Right cardiac atrium (tissue), 5 donors: ENCODE measurements at regions of chr11 and their contacts with region 1.

Region 1: GRCh38 chr11:102488208-102488607 is 35.6 kb upstream of the TMEM123 start:
- DNase-seq: no peak
- ATAC-seq: no peak
- H3K4me3 ChIP-seq: no peak overlapping the region
- H3K27ac ChIP-seq: no peak overlapping the region
- H3K4me1 ChIP-seq: no peaks in the 10 kb centered on the region
- H3K27me3 ChIP-seq: no peaks in the 10 kb centered on the region

Region 2: DNA sequence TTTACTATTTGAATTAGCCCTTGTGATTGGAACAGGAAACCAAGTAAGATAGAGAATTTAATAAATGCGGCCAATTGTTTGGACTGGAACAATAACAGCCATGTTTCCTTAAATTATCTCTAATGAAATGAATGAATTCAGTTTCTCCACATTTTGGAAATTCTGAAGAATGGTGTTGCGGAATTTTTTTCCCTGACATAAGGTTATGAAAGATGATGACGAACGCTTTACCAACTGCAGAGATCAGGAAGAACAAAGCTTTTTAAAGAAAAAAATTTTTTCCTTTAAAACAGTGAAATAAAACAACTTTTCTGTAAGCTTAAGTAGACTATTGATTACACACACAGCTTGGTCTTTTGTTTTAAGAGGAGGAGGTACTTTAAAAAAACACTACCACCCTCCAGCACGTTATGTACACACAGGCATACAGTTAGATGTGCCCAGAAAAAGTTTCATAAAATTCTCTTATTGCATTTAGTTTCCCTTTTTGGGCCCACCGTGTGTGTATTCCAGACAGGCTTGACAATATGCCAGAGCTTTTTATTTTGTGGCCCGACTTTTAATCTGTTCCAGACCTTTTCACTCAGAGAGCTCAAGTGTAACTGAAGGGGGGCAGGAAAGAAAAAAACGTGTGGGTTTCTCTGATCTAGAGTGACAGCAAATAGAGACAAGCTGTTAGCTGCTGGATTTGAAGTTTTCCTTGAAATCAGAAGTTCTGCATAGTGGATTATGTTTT is 300.6 kb before region 1 on chr11:
- intact Hi-C with region 1: no loop called
- DNase-seq: no peak
- ATAC-seq: peak in 1 of 2 donors; percentile 51
- H3K4me3 ChIP-seq: no peak overlapping the region
- H3K27ac ChIP-seq: no peak overlapping the region
- H3K4me1 ChIP-seq: peaks cover 2% of the 10 kb centered on the region
- H3K27me3 ChIP-seq: no peaks in the 10 kb centered on the region

Region 3: GRCh38 chr11:102287964-102288724 is 200.1 kb before region 1 on chr11:
- intact Hi-C with region 1: loop called in 2 of 4 experiments (anchors 10 kb)
- DNase-seq: peak in 1 of 3 donors; percentile 56
- ATAC-seq: peak; percentile 88 to 90
- H3K4me3 ChIP-seq: peak overlapping the region; percentile 31
- H3K27ac ChIP-seq: no peak overlapping the region
- H3K4me1 ChIP-seq: no peaks in the 10 kb centered on the region
- H3K27me3 ChIP-seq: no peaks in the 10 kb centered on the region

Region 4: GRCh38 chr11:102390667-102391465 is 97.3 kb before region 1 on chr11:
- intact Hi-C with region 1: loop called in 3 of 4 experiments (anchors 5 kb)
- DNase-seq: peak; percentile 57 to 75 (median 70)
- ATAC-seq: peak; percentile 81 to 90
- H3K4me3 ChIP-seq: no peak overlapping the region
- H3K27ac ChIP-seq: no peak overlapping the region
- H3K4me1 ChIP-seq: no peaks in the 10 kb centered on the region
- H3K27me3 ChIP-seq: no peaks in the 10 kb centered on the region

Region 5: DNA sequence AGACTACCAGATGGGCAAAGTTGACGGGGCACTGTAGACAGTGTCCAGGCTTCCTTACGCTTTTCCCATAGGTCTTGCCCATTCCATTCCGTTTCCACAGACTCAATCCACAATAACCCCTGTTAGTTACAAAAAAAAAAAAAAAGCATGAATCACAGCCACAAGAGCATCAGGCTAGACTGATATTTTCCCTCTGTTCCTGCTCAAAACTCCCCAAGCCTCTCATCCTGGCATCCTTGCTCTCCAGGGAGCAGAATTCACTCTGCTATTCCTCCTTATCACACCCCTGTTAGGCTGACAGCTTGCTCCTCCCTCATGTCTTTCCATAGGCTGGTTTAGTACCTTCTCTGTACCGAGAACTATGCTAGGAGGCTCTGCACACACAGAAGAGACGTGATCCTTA is 77.8 kb before region 1 on chr11:
- intact Hi-C with region 1: no loop called
- DNase-seq: no peak
- ATAC-seq: peak in 1 of 2 donors; percentile 38
- H3K4me3 ChIP-seq: no peak overlapping the region
- H3K27ac ChIP-seq: no peak overlapping the region
- H3K4me1 ChIP-seq: peaks cover 10% of the 10 kb centered on the region
- H3K27me3 ChIP-seq: no peaks in the 10 kb centered on the region